ENCODE measurements at regions of chr2 and their contacts with region 1.

Region 1: DNA sequence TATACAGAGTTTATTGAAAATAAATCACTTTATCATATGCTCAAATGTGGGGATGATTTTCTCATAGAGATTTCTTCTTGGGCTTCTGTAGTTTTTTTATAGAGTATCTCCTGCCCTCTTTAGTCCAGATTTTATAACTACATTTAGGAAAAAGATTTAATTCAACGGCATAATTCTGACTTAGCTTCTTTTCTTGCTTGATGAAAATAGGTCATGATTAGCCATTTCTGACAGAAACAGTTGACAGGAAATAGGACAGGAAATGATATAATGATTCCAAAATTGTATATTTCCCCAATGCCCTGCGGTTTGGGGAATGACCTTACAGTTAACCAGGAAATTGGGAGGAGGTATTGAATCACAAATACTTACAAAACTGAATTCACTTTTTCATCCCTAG is 1531.9 kb upstream of the ACVR2A start:
- DNase-seq: peak; percentile 58
- H3K4me3 ChIP-seq: no peak overlapping the region
- H3K27ac ChIP-seq: no peak overlapping the region
- H3K4me1 ChIP-seq: peaks cover 23% of the 10 kb centered on the region
- H3K27me3 ChIP-seq: no peaks in the 10 kb centered on the region

Region 2: DNA sequence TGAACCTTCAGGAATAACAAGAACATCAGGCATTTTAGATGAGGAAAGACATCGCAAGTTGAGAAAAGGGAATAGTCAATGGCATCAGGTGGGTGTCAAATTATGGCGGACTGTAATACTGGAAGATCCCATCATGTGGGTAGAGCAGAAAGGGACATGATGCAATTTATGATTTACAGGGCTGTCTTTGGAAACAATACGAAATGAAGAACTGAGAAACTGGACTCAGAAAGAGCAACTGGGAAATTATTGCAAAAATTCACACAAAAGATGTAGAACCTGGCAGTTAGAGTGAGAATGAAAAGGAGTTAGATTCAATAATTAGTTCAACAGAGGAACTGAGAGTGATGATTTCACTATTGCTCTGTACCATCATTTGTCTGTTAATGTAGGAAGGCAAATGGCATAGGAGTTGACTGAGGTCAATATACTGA is 103.0 kb before region 1 on chr2:
- in situ Hi-C with region 1: no loop called
- DNase-seq: no peak
- H3K4me3 ChIP-seq: no peak overlapping the region
- H3K27ac ChIP-seq: no peak overlapping the region
- H3K4me1 ChIP-seq: no peaks in the 10 kb centered on the region
- H3K27me3 ChIP-seq: no peaks in the 10 kb centered on the region

Region 3: DNA sequence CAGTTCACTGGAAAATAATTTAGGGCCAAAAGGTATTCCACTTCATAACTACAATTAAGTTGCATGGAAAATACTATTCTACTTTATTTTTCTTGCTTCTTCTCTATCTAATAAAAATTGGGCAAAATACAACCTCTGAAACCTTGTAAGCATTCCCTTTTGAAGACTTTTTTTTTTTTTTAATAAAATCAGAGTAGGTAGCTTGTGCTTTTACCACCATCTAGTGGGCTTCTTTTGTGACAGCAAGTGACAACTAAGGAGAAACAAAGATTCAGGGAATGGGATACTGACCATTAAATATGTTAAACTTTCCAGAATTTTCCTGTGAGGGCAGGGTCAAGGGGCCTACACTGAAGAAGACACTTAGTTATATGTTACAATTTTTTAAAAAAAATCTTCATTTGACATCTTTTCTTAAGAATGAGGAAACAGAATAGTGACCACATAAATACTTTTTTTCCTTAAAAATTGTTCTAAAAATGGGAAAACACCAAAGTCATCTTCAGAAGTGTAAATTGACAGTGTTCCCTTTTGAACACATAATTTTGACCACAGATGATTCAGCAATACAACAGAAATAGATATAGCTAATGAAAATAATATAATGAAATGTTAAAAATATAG is 348.7 kb after region 1 on chr2:
- in situ Hi-C with region 1: loop called (anchors 25 kb)
- DNase-seq: peak; percentile 69
- H3K4me3 ChIP-seq: no peak overlapping the region
- H3K27ac ChIP-seq: no peak overlapping the region
- H3K4me1 ChIP-seq: peaks cover 5% of the 10 kb centered on the region
- H3K27me3 ChIP-seq: no peaks in the 10 kb centered on the region

Measured in GM23248 (cell line).